H1 (cell line): ENCODE measurements at regions of chr20 and their contacts with region 1.

Region 1: GRCh38 chr20:49132995-49133478 is 55.1 kb downstream of the STAU1 start:
- DNase-seq: no peak
- H3K4me3 ChIP-seq: no peak overlapping the region
- H3K27ac ChIP-seq: no peak overlapping the region
- H3K4me1 ChIP-seq: peaks cover 0 to 6% (median 0%) of the 10 kb centered on the region in 4 experiments; a peak in 3 of 7 replicates
- H3K27me3 ChIP-seq: no peaks in the 10 kb centered on the region
- CTCF ChIP-seq: peak in 2 of 3 experiments; percentile 46 to 58; a peak in 3 of 4 replicates
- EP300 ChIP-seq: no peak
- POLR2A ChIP-seq: no peak
- RAD21 ChIP-seq: peak; percentile 60 to 73

Region 2: GRCh38 chr20:49179368-49180277 is 46.6 kb after region 1 on chr20:
- CTCF ChIA-PET with region 1: interaction called, 12 read pairs
- POLR2A ChIA-PET with region 1: interaction called, 3 read pairs
- DNase-seq: no peak
- H3K4me3 ChIP-seq: no peak overlapping the region
- H3K27ac ChIP-seq: no peak overlapping the region
- H3K4me1 ChIP-seq: no peaks in the 10 kb centered on the region; a peak in 1 of 7 replicates
- H3K27me3 ChIP-seq: no peaks in the 10 kb centered on the region
- CTCF ChIP-seq: no peak
- EP300 ChIP-seq: no peak
- POLR2A ChIP-seq: no peak
- RAD21 ChIP-seq: no peak

Region 3: GRCh38 chr20:49185071-49185757 is 52.2 kb after region 1 on chr20:
- CTCF ChIA-PET with region 1: interaction called, 12 read pairs
- POLR2A ChIA-PET with region 1: interaction called, 5 read pairs
- DNase-seq: no peak
- H3K4me3 ChIP-seq: no peak overlapping the region
- H3K27ac ChIP-seq: no peak overlapping the region
- H3K4me1 ChIP-seq: peaks cover 0 to 4% (median 0%) of the 10 kb centered on the region in 4 experiments; a peak in 3 of 7 replicates
- H3K27me3 ChIP-seq: no peaks in the 10 kb centered on the region
- CTCF ChIP-seq: no peak
- EP300 ChIP-seq: no peak
- POLR2A ChIP-seq: no peak
- RAD21 ChIP-seq: no peak

Region 4: GRCh38 chr20:49207076-49207475 is 74.0 kb after region 1 on chr20:
- CTCF ChIA-PET with region 1: interaction called, 10 read pairs
- POLR2A ChIA-PET with region 1: no interaction called
- DNase-seq: peak; percentile 25 to 59
- H3K4me3 ChIP-seq: no peak overlapping the region
- H3K27ac ChIP-seq: no peak overlapping the region
- H3K4me1 ChIP-seq: 0 out of 7 replicates have a peak, but pooled peaks cover 0 to 2% (median 0%) of the 10 kb centered on the region in 4 experiments
- H3K27me3 ChIP-seq: no peaks in the 10 kb centered on the region
- CTCF ChIP-seq: peak; percentile 61 to 72 (median 64)
- EP300 ChIP-seq: no peak
- POLR2A ChIP-seq: no peak
- RAD21 ChIP-seq: peak; percentile 52 to 63; a peak in 3 of 4 replicates